PC-9 (cell line): ENCODE measurements at regions of chr3 and their contacts with region 1.

Region 1: GRCh38 chr3:124878561-124879336 is 8.4 kb downstream of the ITGB5 start:
- DNase-seq: peak; percentile 80 to 98
- H3K4me3 ChIP-seq: peak overlapping the region; percentile 13; the same call in 1 of the 2 replicates
- H3K27ac ChIP-seq: peak overlapping the region; percentile 85
- H3K4me1 ChIP-seq: peaks cover 84% of the 10 kb centered on the region
- H3K27me3 ChIP-seq: no peaks in the 10 kb centered on the region
- CTCF ChIP-seq: no peak

Region 2: GRCh38 chr3:123652346-123652984 is 1226.3 kb before region 1 on chr3:
- CTCF ChIA-PET with region 1: no interaction called
- POLR2A ChIA-PET with region 1: no interaction called
- intact Hi-C with region 1: no loop called
- DNase-seq: peak; percentile 51 to 81
- H3K4me3 ChIP-seq: no peak overlapping the region
- H3K27ac ChIP-seq: no peak overlapping the region
- H3K4me1 ChIP-seq: no peaks in the 10 kb centered on the region; the same call in 1 of the 2 replicates
- H3K27me3 ChIP-seq: no peaks in the 10 kb centered on the region
- CTCF ChIP-seq: peak; percentile 92

Region 3: GRCh38 chr3:124791639-124792151 is 87.1 kb before region 1 on chr3:
- CTCF ChIA-PET with region 1: no interaction called
- POLR2A ChIA-PET with region 1: no interaction called
- intact Hi-C with region 1: loop called (anchors 2 kb)
- DNase-seq: no peak
- H3K4me3 ChIP-seq: no peak overlapping the region
- H3K27ac ChIP-seq: no peak overlapping the region
- H3K4me1 ChIP-seq: peaks cover 26% of the 10 kb centered on the region
- H3K27me3 ChIP-seq: no peaks in the 10 kb centered on the region
- CTCF ChIP-seq: no peak

Region 4: DNA sequence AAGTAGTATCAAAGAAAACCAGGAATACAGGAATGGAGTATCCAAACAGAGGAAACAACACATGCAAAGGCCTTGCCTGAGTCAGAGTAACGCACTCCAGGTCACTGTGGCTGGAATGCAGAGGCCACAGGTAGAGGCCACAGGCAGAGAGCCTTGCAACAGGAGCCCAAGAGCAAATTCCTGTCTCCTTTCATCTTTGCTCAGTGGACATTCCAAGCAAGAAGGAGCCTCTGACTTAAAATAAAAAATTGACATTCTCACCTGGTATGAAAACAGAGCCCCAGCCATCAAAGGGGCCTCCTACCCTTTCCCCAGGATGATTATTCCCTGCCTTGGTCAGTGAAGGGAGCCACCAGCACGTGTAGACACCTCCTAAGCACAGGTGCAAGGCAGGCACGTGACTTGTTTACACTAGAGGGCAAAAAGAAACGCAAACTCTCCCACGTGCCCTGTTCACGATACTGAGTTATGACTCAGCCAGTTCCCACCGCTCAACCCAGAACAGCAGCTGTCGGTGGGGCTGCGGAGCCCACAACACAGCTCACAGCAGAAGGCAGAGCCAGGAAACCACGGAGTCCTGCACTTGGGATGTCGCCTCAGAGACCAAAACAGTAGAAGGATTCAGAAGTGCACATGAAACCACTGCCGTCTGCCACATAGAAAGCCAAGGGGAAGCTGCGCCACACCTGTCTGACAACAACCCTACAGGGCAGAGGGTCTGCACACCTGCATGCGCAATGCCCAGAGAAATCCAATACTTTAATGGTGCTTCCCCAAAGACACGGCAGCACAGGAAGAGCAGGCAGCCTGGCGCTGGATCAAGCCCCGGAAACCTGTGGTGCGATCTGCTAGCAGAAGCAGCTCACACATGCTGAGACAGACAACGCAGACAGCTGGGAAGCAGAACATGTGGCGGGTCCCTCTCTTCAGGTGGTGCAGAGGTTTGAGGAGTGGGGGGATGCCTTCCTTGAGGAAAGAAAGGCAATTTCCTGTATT is 43.7 kb before region 1 on chr3:
- CTCF ChIA-PET with region 1: no interaction called
- POLR2A ChIA-PET with region 1: no interaction called
- intact Hi-C with region 1: loop called (anchors 1 kb)
- DNase-seq: peak; percentile 85 to 98
- H3K4me3 ChIP-seq: peak overlapping the region; percentile 42; the same call in 1 of the 2 replicates
- H3K27ac ChIP-seq: peak overlapping the region; percentile 99
- H3K4me1 ChIP-seq: peaks cover 79% of the 10 kb centered on the region
- H3K27me3 ChIP-seq: no peaks in the 10 kb centered on the region
- CTCF ChIP-seq: no peak

Region 5: DNA sequence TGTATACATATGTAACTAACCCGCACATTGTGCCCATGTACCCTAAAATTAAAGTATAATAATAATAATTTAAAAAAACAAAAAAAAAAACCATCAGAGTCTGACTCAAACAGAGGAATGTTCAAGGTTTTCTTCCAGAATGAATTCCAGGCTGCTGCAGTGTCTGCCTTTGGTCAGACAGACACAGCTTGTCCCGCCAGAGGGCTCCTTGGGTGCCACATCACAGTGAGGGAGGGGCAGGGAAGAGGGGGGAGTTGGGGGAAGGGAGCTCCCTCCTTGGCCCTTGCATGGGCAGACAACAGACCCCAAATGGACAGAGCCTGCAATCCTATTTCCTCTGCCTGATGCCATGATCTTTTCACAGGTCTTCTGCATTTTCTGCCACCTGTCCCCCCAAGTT is 28.1 kb before region 1 on chr3:
- CTCF ChIA-PET with region 1: no interaction called
- POLR2A ChIA-PET with region 1: no interaction called
- intact Hi-C with region 1: no loop called
- DNase-seq: no peak
- H3K4me3 ChIP-seq: no peak overlapping the region
- H3K27ac ChIP-seq: no peak overlapping the region
- H3K4me1 ChIP-seq: peaks cover 14% of the 10 kb centered on the region
- H3K27me3 ChIP-seq: no peaks in the 10 kb centered on the region
- CTCF ChIP-seq: no peak

Region 6: DNA sequence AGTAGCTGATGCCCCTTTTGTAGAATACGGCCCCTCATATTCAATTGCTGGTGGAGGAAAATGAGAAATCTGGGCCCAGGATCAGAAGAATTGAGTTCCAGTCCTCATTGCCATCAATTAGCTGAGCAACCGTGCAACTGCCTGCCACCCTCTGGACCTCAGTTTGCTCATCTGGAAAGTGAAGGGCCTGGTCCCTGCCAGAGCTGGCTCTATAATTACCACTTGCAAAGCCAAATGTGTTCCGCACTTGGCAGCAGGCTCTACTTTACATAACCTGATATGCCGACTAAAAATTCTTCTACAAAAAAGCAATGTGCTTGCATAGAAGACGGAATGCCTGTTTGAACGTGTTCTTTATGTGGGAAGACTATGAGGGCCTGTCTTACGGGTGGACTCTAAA is 17.0 kb after region 1 on chr3:
- CTCF ChIA-PET with region 1: interaction called, 12 read pairs
- POLR2A ChIA-PET with region 1: no interaction called
- intact Hi-C with region 1: no loop called
- DNase-seq: no peak
- H3K4me3 ChIP-seq: no peak overlapping the region
- H3K27ac ChIP-seq: no peak overlapping the region
- H3K4me1 ChIP-seq: peaks cover 3% of the 10 kb centered on the region; the same call in 1 of the 2 replicates
- H3K27me3 ChIP-seq: no peaks in the 10 kb centered on the region
- CTCF ChIP-seq: no peak

Region 7: DNA sequence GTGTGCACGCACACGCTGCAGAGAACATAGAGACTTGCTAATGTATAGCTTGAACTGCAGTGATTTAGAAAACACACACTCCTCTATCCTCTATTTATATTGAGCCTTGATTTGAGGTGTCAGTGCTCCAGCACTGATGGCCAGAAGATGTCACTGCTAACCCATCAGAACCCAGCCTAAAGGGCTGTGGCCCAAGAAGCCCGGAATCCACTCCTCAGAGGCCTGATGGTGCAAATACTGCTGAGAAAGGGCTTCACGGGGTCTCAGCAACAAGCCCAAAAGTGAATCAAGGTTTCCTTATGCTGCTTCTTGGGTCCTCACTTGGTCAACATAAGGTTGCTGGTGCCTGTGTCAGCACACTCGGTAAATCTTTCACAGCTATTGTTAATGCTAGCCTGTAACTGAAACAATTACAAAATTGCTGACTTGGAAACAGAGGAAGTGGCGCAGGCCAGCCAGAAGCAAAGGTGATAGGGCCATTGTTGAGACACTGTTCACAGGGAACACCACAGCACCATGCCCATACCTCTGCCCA is 116.8 kb after region 1 on chr3:
- CTCF ChIA-PET with region 1: no interaction called
- POLR2A ChIA-PET with region 1: no interaction called
- intact Hi-C with region 1: no loop called
- DNase-seq: peak; percentile 52 to 54
- H3K4me3 ChIP-seq: no peak overlapping the region
- H3K27ac ChIP-seq: no peak overlapping the region
- H3K4me1 ChIP-seq: no peaks in the 10 kb centered on the region
- H3K27me3 ChIP-seq: no peaks in the 10 kb centered on the region
- CTCF ChIP-seq: peak; percentile 80